ENCODE measurements at regions of chr2 and their contacts with region 1.

Region 1: DNA sequence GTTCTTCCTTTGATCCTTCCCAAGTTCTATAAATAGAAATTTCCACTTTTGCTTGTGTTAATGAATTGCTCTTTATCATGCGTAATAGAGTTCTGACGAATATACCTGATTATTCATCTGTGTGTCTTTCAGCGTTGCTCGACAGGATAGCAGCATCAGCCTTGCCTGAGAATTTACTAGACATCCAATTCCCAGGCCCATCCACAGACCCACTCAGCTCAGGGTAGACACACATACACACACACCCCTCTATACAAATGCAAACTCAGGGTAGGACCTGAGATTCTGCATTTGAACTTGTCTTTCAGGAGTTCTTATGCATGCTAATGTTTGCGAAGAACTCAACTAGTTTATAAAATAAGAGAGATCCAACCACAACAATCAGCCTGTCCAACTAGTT is 343.4 kb upstream of the GYPC start:
- DNase-seq: no peak
- H3K4me3 ChIP-seq: no peak overlapping the region
- H3K27ac ChIP-seq: no peak overlapping the region
- H3K4me1 ChIP-seq: no peaks in the 10 kb centered on the region
- H3K27me3 ChIP-seq: no peaks in the 10 kb centered on the region
- CTCF ChIP-seq: no peak
- EP300 ChIP-seq: no peak
- POLR2A ChIP-seq: no peak

Region 2: GRCh38 chr2:126367361-126367760 is 54.8 kb after region 1 on chr2:
- in situ Hi-C with region 1: no loop called
- intact Hi-C with region 1: loop called (anchors 2 kb)
- DNase-seq: no peak
- H3K4me3 ChIP-seq: no peak overlapping the region
- H3K27ac ChIP-seq: no peak overlapping the region
- H3K4me1 ChIP-seq: no peaks in the 10 kb centered on the region
- H3K27me3 ChIP-seq: no peaks in the 10 kb centered on the region
- CTCF ChIP-seq: no peak
- EP300 ChIP-seq: no peak
- POLR2A ChIP-seq: no peak

Region 3: DNA sequence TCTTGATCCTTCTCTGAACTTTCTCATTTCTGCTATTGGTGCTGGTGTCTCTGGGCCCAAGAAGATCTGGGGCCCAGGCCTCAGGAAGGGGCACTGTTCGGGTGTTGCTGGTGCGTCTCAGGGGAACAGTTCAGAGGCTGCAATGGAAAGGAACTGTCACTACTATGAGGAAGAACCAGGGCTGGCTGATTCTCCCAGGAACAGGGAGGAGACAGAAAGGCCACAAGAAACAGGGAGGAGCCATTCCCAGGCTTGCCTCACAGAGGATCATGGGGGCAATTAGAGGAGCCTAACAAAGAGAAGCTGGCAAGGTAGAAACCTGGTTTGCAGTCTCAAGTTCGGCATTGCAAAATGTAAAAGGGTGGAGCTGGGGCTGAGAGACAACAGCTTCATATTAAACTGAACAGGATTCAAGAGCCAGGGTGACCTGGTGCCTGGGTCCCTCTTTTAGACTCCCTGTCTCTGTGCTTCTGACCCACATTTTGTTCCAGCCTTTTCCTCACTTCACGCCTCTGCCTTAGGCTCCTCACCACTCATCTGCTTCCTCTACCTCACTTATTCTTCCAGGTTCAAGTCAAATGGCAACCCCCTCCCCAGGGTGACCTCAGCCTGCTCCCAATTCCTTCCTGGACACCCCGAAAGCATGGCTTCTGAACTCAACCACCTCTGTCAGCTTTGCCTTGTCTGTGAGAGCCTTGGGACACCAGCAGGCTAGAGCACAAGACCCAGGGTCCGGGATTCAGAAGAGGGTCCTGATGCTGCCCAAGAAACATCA is 401.8 kb after region 1 on chr2:
- in situ Hi-C with region 1: no loop called
- intact Hi-C with region 1: no loop called
- DNase-seq: no peak
- H3K4me3 ChIP-seq: no peak overlapping the region
- H3K27ac ChIP-seq: no peak overlapping the region
- H3K4me1 ChIP-seq: no peaks in the 10 kb centered on the region
- H3K27me3 ChIP-seq: no peaks in the 10 kb centered on the region
- CTCF ChIP-seq: no peak
- EP300 ChIP-seq: no peak
- POLR2A ChIP-seq: no peak

Region 4: DNA sequence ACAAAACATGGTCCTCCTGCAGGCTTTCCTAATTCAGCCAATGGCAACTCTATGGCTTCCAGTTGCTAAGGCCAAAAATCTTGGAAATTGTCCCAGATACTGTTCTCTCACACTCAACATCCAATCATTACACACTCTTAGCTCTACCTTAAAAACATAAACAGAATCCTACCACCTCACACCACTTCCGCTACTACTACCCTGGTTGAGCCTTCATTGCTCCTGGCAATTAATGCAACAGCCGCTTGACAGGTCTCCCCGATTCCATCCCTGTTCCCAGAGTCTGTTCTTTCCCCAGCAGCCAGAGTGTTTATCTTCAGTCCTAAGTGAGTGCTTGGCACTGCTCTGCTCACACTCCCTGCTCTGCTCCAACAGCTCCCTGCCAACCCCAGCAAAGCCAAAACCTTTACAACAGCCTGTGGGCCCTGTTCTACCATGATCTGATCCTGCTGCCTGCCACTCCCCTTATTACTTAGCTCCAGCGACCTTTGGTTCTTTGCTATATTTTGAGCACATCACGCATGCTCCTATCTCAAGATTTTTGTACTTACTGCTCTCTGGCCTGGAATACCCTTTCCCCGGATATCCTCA is 1640.6 kb after region 1 on chr2:
- in situ Hi-C with region 1: no loop called
- intact Hi-C with region 1: no loop called
- DNase-seq: peak; percentile 56
- H3K4me3 ChIP-seq: no peak overlapping the region
- H3K27ac ChIP-seq: peak overlapping the region; percentile 57 to 71 (median 66)
- H3K4me1 ChIP-seq: peaks cover 7 to 22% (median 16%) of the 10 kb centered on the region in 4 donors
- H3K27me3 ChIP-seq: no peaks in the 10 kb centered on the region
- CTCF ChIP-seq: no peak
- EP300 ChIP-seq: no peak
- POLR2A ChIP-seq: no peak

Measured in transverse colon (tissue), 4 donors.